CD14-positive monocyte (primary cell): ENCODE measurements at regions of chr22 and their contacts with region 1.

Region 1: GRCh38 chr22:37383341-37383740 is 43.9 kb downstream of the ELFN2 start:
- DNase-seq: no peak
- H3K4me3 ChIP-seq: no peak overlapping the region
- H3K4me3 Mint-ChIP-seq: no peak overlapping the region
- H3K27ac ChIP-seq: no peak overlapping the region
- H3K27ac Mint-ChIP-seq: no peak overlapping the region
- H3K4me1 ChIP-seq: no peaks in the 10 kb centered on the region
- H3K4me1 Mint-ChIP-seq: peaks cover 3% of the 10 kb centered on the region
- H3K27me3 ChIP-seq: peaks cover 0 to 8% of the 10 kb centered on the region in 2 donors
- H3K27me3 Mint-ChIP-seq: peaks cover 8 to 39% (median 10%) of the 10 kb centered on the region in 3 donors
- CTCF ChIP-seq: no peak

Region 2: DNA sequence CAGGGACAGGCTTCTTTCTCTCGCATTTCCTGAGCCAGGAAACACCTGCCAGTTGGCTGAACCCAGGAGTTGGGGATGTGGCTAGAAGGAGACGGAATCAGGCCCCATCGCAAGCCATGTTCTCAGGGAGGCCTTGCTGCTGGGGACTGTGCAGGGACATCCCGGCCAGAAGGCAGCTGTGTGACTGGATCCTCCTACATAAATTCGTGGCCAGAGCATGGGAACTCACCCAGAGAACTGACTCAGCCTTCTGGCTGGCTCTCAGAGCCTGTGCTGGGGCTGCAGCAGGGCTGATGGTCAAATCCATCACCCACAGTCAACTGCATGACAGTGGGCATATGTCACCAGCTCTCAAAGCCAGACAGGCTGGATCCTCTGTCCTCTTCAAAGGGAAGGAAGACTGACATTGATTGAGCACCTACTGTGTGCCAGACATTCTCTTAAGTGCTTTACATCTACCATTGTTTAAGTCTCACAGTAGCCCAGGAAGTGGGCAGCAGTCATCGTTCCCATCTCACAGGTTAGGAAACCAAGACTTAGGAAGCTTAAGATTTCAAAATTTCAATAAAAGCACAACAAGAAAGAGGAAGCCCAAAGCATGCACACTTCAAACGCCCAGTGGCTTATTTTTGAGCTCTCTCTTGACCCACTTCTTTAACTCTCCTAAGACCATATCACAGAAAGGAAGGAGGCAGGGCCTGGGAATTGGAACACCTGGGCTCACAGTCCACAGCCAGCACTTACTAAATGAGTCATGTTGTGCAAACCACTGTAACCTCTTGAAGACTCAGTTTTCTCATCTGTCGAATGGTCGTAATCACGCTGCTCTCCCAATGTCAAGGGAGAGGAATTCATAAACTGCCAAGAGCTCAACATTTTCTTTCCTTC is 648.9 kb before region 1 on chr22:
- intact Hi-C with region 1: no loop called
- DNase-seq: peak; percentile 8 to 41 (median 18)
- H3K4me3 ChIP-seq: no peak overlapping the region
- H3K4me3 Mint-ChIP-seq: peak overlapping the region in 1 of 2 donors; percentile 16
- H3K27ac ChIP-seq: peak overlapping the region; percentile 17 to 34
- H3K27ac Mint-ChIP-seq: peak overlapping the region; percentile 42 to 82 (median 74)
- H3K4me1 ChIP-seq: peaks cover 54 to 56% of the 10 kb centered on the region in 2 donors
- H3K4me1 Mint-ChIP-seq: peaks cover 64% of the 10 kb centered on the region
- H3K27me3 ChIP-seq: no peaks in the 10 kb centered on the region
- H3K27me3 Mint-ChIP-seq: peaks cover 2 to 5% (median 3%) of the 10 kb centered on the region in 3 donors
- CTCF ChIP-seq: no peak

Region 3: DNA sequence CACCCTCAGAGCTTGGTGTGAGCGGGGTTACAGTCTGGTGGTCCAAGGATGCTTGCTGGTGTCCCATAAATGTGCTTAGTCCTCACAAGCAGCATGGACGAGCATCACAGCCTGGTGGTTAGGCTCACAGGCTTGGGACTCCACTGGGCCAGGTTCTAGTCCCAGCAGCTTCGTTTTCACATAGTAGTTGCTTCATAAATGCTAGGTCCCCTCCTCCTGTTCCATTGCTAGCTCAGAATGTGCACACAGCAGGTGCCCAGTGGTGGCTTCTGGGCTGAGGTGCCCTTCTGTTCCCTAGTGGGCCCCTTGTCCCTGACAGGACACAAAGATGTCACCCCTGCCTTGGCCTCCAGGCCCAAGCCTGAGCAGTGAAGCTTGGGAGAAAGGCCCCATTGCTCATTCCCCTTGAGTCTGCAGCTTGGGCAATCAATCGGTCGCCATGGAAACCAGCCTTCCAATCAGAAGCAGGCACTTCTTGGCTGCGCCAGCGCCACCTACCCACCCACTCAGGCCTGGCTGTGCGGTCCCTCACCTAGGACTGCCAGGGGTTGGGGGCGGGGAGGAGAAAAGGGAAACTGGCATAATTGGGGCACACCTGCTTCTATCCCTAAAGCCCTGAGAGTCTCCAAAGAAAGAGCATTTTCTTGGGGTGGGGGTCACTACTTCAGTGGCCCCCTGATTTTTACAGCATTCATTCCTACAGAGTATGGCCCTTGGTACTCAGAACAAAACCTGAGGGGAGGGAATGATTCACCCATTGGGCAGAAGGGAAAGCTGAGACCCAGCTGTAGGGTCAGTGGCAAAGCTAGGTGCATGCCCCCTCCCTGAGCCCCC is 52.9 kb before region 1 on chr22:
- intact Hi-C with region 1: loop called in 1 of 2 experiments (anchors 10 kb)
- DNase-seq: peak; percentile 44 to 86 (median 69)
- H3K4me3 ChIP-seq: no peak overlapping the region
- H3K4me3 Mint-ChIP-seq: no peak overlapping the region
- H3K27ac ChIP-seq: no peak overlapping the region
- H3K27ac Mint-ChIP-seq: no peak overlapping the region
- H3K4me1 ChIP-seq: peaks cover 13 to 17% of the 10 kb centered on the region in 2 donors
- H3K4me1 Mint-ChIP-seq: peaks cover 11% of the 10 kb centered on the region
- H3K27me3 ChIP-seq: peaks cover 22 to 60% of the 10 kb centered on the region in 2 donors
- H3K27me3 Mint-ChIP-seq: peaks cover 69 to 87% (median 70%) of the 10 kb centered on the region in 3 donors
- CTCF ChIP-seq: no peak

Region 4: DNA sequence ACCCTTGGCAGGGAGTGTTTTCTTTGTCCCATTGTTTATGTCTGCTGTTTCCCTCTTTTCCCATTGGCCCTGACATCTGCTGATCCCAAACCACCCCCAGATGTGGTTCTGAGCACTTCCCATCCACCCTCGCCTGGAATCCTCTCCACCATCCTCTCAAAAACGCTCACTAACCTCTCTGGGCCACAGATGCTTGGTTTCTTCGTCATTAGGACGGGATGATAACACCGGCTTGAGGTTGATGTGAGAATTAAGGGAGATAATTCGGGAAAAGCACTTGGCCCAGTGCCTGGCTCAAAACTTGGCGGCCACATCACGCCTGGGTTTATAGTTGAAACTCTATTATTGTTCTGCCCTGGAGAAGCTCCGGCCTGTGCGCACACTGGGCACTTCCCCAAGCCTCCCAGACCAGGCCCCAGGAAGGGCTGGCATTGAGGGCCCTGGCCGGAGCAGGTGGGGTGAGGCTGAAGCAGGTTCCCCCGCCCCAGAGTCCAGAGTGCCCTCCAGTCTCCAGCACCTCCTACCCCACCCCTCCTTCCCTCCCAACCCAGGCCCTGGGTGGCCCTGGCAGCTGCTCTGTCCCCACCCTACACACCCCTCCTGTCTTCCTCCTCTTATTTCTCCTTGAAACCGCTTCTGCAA is 37.4 kb before region 1 on chr22:
- intact Hi-C with region 1: no loop called
- DNase-seq: no peak
- H3K4me3 ChIP-seq: no peak overlapping the region
- H3K4me3 Mint-ChIP-seq: no peak overlapping the region
- H3K27ac ChIP-seq: no peak overlapping the region
- H3K27ac Mint-ChIP-seq: no peak overlapping the region
- H3K4me1 ChIP-seq: no peaks in the 10 kb centered on the region
- H3K4me1 Mint-ChIP-seq: no peaks in the 10 kb centered on the region
- H3K27me3 ChIP-seq: no peaks in the 10 kb centered on the region
- H3K27me3 Mint-ChIP-seq: peaks cover 5 to 16% (median 6%) of the 10 kb centered on the region in 3 donors
- CTCF ChIP-seq: no peak

Region 5: GRCh38 chr22:37403267-37403960 is 20.1 kb after region 1 on chr22:
- intact Hi-C with region 1: no loop called
- DNase-seq: no peak
- H3K4me3 ChIP-seq: no peak overlapping the region
- H3K4me3 Mint-ChIP-seq: no peak overlapping the region
- H3K27ac ChIP-seq: no peak overlapping the region
- H3K27ac Mint-ChIP-seq: peak overlapping the region in 1 of 7 donors; percentile 11
- H3K4me1 ChIP-seq: peaks cover under 1 to 4% of the 10 kb centered on the region in 2 donors
- H3K4me1 Mint-ChIP-seq: peaks cover under 1% of the 10 kb centered on the region
- H3K27me3 ChIP-seq: no peaks in the 10 kb centered on the region
- H3K27me3 Mint-ChIP-seq: peaks cover 9 to 25% (median 17%) of the 10 kb centered on the region in 3 donors
- CTCF ChIP-seq: no peak